ENCODE measurements at regions of chr5 and their contacts with region 1.

Region 1: DNA sequence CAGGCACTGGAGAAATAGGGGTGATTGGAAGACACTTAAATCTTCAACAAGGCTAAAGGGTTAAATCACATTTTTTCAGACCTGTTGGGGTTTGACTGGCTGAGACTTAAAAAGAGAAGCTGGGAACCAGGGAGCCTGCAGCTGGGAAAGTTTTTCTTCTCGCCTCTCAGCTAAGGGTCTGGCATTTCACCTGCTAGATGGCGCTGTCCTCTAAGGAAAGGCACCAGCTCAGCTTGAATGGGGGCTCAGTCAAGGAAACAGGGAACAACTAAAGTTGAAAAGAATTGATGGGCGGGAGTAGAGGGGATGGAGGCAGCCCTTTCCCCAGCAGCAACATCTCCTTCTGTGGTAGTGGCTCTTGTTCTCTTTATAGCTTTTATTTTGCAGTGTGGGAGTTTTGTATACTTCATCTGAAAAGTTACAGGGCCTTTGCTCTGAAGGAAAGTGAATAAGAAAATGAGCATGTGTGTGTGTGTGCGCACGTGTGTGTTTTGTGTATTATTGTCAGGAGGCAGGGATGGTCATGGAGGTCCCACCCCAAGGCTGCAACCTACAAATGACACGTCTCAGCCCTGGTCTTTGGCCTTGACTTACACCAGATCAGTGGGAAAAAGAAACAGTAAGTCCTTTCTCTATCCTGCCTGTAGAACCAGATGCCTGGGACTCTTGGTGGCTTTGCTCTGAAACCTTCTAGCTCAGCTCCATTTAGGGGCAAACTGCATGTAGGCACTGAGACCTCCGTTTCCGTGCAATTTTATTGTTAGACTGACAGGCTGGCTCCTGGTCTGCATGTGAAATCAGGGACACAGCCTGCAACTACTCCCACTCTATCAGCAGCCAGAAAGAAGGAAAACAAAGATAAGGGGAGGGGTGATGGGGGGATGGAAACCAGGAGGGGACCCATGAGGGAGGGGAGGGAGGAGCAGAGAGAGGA is 316.2 kb upstream of the CLINT1 start:
- DNase-seq: peak; percentile 68
- H3K4me3 Mint-ChIP-seq: no peak overlapping the region
- H3K27ac Mint-ChIP-seq: no peak overlapping the region
- H3K4me1 Mint-ChIP-seq: no peaks in the 10 kb centered on the region
- H3K27me3 Mint-ChIP-seq: peaks cover 15% of the 10 kb centered on the region

Region 2: DNA sequence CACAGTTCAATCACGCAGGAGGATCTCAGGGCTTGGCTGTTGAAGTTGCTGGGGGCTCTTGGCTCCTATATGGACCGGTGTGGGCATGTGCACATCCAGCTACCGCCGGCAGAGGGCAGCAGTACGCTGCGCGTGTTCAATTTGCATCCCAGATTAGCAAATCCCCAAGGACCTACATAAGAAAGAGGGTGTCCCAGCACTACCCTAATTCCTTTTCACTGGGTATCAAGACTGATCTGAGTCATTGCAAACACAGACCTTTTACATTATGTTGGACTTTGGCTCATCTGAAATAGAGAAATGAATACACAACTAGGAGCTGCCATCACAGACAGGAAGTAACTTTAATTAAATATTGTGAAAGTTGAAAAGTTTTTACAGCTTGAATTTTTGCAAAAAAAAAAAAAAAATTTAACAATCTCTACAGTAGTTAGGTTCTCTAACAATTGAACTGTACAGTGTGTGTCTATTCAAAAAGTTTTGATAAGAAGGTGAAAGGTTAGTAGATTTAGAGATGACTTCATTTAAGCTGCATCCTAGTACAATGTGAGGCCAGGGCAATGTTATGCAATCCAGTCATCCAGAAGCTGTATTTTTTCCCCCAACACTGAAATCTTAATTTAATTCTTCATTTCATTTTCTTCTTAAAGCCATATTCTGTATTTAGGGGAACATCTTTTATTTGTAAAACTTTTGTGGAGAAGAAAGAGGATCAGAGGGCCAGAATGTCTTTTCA is 520.6 kb after region 1 on chr5:
- CTCF ChIA-PET with region 1: interaction called, 22 read pairs
- DNase-seq: peak; percentile 71
- H3K4me3 Mint-ChIP-seq: no peak overlapping the region
- H3K27ac Mint-ChIP-seq: no peak overlapping the region
- H3K4me1 Mint-ChIP-seq: no peaks in the 10 kb centered on the region
- H3K27me3 Mint-ChIP-seq: peaks cover 9% of the 10 kb centered on the region